ENCODE measurements at regions of chr21 and their contacts with region 1.

Region 1: GRCh38 chr21:41663801-41664788 is 102.8 kb downstream of the RIPK4 start:
- DNase-seq: peak; percentile 64
- H3K4me3 Mint-ChIP-seq: peak overlapping the region; percentile 54
- H3K27ac Mint-ChIP-seq: peak overlapping the region; percentile 88
- H3K4me1 Mint-ChIP-seq: peaks cover 32% of the 10 kb centered on the region
- H3K27me3 Mint-ChIP-seq: no peaks in the 10 kb centered on the region
- CTCF ChIP-seq: no peak

Region 2: DNA sequence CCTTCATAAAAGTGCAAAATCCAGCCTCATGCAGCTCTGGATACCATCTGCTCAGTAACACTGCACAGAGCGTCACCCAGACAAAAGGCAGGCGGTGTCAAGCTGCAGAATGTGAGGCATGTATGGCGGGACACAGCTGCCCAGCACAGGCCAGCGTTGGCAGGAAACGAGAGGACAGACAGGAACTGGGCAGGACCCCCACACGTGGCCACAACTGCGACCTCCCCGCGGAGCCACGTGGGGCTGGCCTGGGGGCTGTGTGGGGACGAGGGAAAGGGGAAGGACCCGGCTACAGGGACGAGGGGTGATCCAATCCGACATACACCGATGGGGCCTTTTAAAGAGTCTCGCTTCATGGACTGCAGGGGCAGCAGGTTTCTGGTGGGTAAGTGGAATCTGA is 80.4 kb after region 1 on chr21:
- CTCF ChIA-PET with region 1: no interaction called
- intact Hi-C with region 1: no loop called
- DNase-seq: no peak
- H3K4me3 Mint-ChIP-seq: no peak overlapping the region
- H3K27ac Mint-ChIP-seq: no peak overlapping the region
- H3K4me1 Mint-ChIP-seq: no peaks in the 10 kb centered on the region
- H3K27me3 Mint-ChIP-seq: no peaks in the 10 kb centered on the region
- CTCF ChIP-seq: no peak

Region 3: DNA sequence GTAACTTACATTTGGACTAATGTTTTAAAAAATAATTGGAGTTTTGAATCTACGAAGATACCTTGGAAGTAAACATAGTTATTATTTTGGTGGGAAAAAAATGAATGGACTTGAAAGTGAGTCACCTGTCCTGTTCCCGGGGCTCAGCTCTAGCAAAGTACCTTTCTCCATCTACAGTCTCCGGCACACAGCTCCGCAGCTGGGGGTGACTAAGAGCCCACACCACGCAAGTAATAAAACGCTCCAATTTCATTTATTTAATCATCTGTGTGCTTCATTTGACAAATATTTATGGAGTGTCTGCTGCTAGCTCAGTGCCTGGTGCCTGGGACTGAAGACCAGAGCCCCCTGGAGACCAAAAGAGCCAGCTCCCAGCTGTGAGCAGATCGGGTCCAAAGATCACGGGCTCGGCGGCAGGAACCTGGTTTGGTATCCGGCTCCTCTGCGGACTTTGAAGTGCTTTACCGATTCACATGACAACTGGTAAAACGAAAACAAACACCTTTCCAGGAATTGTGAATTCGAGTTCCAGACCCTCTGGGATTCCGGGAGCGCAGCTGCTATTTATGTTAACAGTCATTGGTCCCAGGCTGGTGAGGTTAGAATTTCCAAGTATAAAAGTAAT is 104.5 kb after region 1 on chr21:
- CTCF ChIA-PET with region 1: interaction called, 3 read pairs
- intact Hi-C with region 1: loop called (anchors 5 kb)
- DNase-seq: peak; percentile 73
- H3K4me3 Mint-ChIP-seq: peak overlapping the region; percentile 76
- H3K27ac Mint-ChIP-seq: peak overlapping the region; percentile 96
- H3K4me1 Mint-ChIP-seq: peaks cover 33% of the 10 kb centered on the region
- H3K27me3 Mint-ChIP-seq: no peaks in the 10 kb centered on the region
- CTCF ChIP-seq: peak; percentile 29